ENCODE measurements at regions of chr19 and their contacts with region 1.

Region 1: GRCh38 chr19:10717356-10718204 is at the start of gene DNM2:
- DNase-seq: peak; percentile 100
- H3K4me3 ChIP-seq: peak within 1 kb of the TSS; percentile 25 to 82 (median 49)
- H3K27ac ChIP-seq: peak within 1 kb of the TSS; percentile 74
- H3K4me1 ChIP-seq: peaks cover 13% of the 10 kb centered on the region
- H3K27me3 ChIP-seq: no peaks in the 10 kb centered on the region
- CTCF ChIP-seq: peak; percentile 77 to 88
- POLR2A ChIP-seq: peak; percentile 60
- total RNA-seq, gene DNM2: 164 and 175 TPM in 2 replicates

Region 2: DNA sequence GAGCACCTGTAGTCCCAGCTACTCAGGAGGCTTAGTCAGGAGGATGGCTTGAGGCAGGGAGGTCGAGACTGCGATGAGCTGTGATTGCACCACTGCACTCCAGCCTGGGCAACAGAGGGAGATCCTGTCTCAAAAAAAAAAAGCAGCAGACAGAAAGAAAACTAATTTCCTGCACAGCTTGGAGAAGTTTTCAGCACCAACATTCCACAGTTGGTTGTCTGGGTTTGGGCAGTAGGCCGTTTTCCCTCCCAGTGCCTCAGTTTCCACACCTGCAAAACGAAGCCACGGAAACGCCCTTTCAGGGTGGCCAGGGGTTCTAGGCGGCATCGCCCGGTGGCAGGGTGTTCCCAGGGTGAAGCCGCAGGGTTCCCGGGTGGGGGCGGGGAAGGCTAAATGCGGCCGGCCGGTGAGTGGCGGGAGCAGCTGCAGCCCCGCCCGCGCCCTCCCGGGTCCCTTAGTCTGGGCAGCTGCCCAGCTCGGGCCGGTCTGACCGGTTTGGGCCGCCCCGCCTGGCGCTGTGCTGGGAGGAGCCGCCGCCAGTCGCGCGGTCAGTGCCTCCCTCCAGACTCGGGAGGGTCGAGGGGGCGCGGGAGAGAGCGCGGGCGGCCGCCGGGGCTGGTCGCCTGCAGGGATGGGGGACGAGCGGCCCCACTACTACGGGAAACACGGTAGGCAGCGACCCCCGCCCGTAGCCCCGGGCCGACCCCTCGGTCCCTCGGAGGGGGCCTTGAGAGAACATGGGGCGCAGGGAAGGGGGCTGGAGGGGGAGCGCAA is 92.4 kb before region 1 on chr19 and contains the start of gene SLC44A2:
- CTCF ChIA-PET with region 1: no interaction called
- POLR2A ChIA-PET with region 1: no interaction called
- dilution Hi-C with region 1: no loop called
- intact Hi-C with region 1: no loop called
- DNase-seq: peak; percentile 41
- H3K4me3 ChIP-seq: peak within 1 kb of the TSS; percentile 33 to 37 (median 33)
- H3K27ac ChIP-seq: no peak within 1 kb of the TSS
- H3K4me1 ChIP-seq: peaks cover 10% of the 10 kb centered on the region
- H3K27me3 ChIP-seq: no peaks in the 10 kb centered on the region
- CTCF ChIP-seq: no peak
- POLR2A ChIP-seq: peak; percentile 22
- total RNA-seq, gene SLC44A2: 130 and 136 TPM in 2 replicates

Region 3: GRCh38 chr19:10727685-10728201 is 10.2 kb after region 1 on chr19:
- CTCF ChIA-PET with region 1: interaction called, 10 read pairs
- POLR2A ChIA-PET with region 1: no interaction called
- dilution Hi-C with region 1: no loop called
- intact Hi-C with region 1: no loop called
- DNase-seq: no peak
- H3K4me3 ChIP-seq: no peak overlapping the region
- H3K27ac ChIP-seq: no peak overlapping the region
- H3K4me1 ChIP-seq: no peaks in the 10 kb centered on the region
- H3K27me3 ChIP-seq: no peaks in the 10 kb centered on the region
- CTCF ChIP-seq: no peak
- POLR2A ChIP-seq: no peak

Region 4: DNA sequence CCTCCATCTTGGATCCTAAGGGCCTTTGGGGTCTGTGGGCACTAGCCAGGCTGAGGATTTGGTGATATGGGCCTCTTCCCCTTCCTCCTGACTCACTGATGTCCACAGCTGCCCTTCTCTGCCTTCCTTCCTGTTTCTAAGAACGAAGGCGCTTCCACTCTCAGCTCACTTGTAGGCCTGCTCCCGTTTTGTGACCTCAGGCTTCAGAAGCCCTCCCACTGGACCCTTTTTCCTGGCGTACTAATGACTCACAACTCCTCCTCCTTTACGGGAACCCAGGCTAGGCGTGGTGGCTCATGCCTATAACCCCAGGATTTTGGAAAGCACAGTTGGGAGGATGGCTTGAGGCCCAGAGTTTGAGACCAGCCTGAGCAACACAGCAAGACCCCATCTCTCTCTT is 62.8 kb after region 1 on chr19:
- CTCF ChIA-PET with region 1: interaction called, 16 read pairs
- POLR2A ChIA-PET with region 1: interaction called, 3 read pairs
- dilution Hi-C with region 1: no loop called
- intact Hi-C with region 1: loop called (anchors 1 kb)
- DNase-seq: peak; percentile 90
- H3K4me3 ChIP-seq: no peak overlapping the region
- H3K27ac ChIP-seq: peak overlapping the region; percentile 96
- H3K4me1 ChIP-seq: peaks cover 19% of the 10 kb centered on the region
- H3K27me3 ChIP-seq: no peaks in the 10 kb centered on the region
- CTCF ChIP-seq: no peak
- POLR2A ChIP-seq: no peak

Region 5: GRCh38 chr19:10828981-10829821 is 111.6 kb after region 1 on chr19:
- CTCF ChIA-PET with region 1: interaction called, 11 read pairs
- POLR2A ChIA-PET with region 1: no interaction called
- dilution Hi-C with region 1: no loop called
- intact Hi-C with region 1: no loop called
- DNase-seq: no peak
- H3K4me3 ChIP-seq: no peak overlapping the region
- H3K27ac ChIP-seq: no peak overlapping the region
- H3K4me1 ChIP-seq: no peaks in the 10 kb centered on the region
- H3K27me3 ChIP-seq: no peaks in the 10 kb centered on the region
- CTCF ChIP-seq: peak in 1 of 2 donors; percentile 11
- POLR2A ChIP-seq: no peak

Region 6: GRCh38 chr19:10864538-10864899 is 146.9 kb after region 1 on chr19:
- CTCF ChIA-PET with region 1: interaction called, 100 read pairs
- POLR2A ChIA-PET with region 1: interaction called, 4 read pairs
- dilution Hi-C with region 1: no loop called
- intact Hi-C with region 1: loop called (anchors 1 kb)
- DNase-seq: peak; percentile 64
- H3K4me3 ChIP-seq: no peak overlapping the region
- H3K27ac ChIP-seq: no peak overlapping the region
- H3K4me1 ChIP-seq: peaks cover 2% of the 10 kb centered on the region
- H3K27me3 ChIP-seq: no peaks in the 10 kb centered on the region
- CTCF ChIP-seq: peak; percentile 93 to 98
- POLR2A ChIP-seq: no peak